Activated CD4-positive, alpha-beta T cell treated with anti-CD3 and anti-CD28 coated beads for 36 hours (primary cell): ENCODE measurements at regions of chr17 and their contacts with region 1.

Region 1: DNA sequence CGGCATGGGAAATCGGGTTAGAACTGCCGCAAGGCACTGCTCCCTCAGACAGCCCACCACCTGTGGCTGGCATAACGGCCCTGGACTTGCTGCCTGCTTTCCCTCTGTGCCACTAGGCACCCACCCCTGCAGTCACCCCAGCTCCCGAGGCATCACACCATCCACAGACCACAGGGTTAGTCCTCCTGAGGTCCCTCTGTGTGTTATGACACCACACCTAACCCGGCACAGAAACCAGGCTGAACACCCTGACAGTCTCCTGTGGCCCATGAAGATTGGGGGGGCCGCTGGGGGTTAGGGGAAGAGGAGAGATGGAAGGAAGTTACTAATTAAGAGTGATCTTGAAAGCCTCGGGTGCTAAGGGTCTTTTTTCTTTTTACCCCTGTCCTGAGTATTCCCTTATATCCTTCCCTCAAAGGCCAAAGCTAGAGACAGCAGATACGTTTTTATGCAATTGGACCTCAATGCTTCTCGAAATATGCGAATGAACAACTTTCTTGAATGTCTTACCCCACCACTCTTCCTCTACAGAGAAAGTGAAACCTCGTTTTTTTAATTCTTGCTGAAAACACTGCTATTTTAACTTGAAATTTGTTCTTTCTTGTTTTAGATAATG is 7.0 kb downstream of the CYTH1 start:
- DNase-seq: peak; percentile 86
- ATAC-seq: peak; percentile 67
- H3K4me3 Mint-ChIP-seq: peak overlapping the region; percentile 84
- H3K27ac Mint-ChIP-seq: peak overlapping the region; percentile 100
- H3K4me1 Mint-ChIP-seq: peaks cover 68% of the 10 kb centered on the region
- H3K27me3 Mint-ChIP-seq: no peaks in the 10 kb centered on the region

Region 2: GRCh38 chr17:78432226-78433012 is 342.6 kb before region 1 on chr17:
- CTCF ChIA-PET with region 1: no interaction called
- POLR2A ChIA-PET with region 1: no interaction called
- intact Hi-C with region 1: no loop called
- DNase-seq: no peak
- ATAC-seq: no peak
- H3K4me3 Mint-ChIP-seq: no peak overlapping the region
- H3K27ac Mint-ChIP-seq: no peak overlapping the region
- H3K4me1 Mint-ChIP-seq: peaks cover 5% of the 10 kb centered on the region
- H3K27me3 Mint-ChIP-seq: no peaks in the 10 kb centered on the region

Region 3: DNA sequence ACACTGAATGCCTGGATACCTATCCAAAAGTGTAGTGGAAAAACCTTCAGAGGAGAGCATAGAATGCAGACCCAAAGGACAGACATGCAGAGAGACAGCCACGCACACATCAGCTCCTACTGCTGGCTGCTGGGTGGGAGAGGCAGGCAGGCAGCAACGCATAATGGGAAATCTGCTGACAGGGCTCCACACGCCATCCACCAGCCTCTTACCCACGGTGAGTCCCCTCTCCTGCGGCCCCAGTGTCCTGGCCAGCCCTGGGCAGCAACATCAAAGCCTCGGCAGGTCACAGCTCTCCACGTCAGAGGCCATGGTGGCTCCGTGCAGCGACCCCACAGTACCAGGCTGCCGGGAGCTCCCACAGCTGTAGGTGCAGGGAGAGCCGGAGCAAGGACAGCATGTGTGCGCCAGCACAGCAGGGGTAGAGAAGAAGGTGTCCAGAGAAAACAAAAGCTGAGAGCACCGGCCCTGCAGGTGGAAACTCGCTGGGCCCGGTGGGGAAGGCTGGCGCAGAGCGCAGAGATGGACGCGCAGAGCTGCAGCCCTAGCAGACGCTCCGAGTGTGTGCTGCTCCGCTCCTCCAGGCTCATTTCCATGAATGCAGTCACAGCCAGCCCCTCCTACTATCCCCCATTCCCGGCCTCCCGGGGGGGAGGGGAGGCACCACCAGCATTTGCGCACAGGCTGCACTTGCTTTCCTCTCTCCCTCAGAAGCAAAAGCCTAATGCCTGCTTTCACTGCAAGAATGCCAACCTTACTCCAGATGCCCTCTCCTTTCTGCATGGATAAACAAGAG is 51.9 kb before region 1 on chr17:
- CTCF ChIA-PET with region 1: interaction called, 5 read pairs
- POLR2A ChIA-PET with region 1: interaction called, 3 read pairs
- intact Hi-C with region 1: loop called (anchors 2 kb)
- DNase-seq: no peak
- ATAC-seq: no peak
- H3K4me3 Mint-ChIP-seq: no peak overlapping the region
- H3K27ac Mint-ChIP-seq: peak overlapping the region; percentile 83
- H3K4me1 Mint-ChIP-seq: peaks cover 94% of the 10 kb centered on the region
- H3K27me3 Mint-ChIP-seq: no peaks in the 10 kb centered on the region

Region 4: DNA sequence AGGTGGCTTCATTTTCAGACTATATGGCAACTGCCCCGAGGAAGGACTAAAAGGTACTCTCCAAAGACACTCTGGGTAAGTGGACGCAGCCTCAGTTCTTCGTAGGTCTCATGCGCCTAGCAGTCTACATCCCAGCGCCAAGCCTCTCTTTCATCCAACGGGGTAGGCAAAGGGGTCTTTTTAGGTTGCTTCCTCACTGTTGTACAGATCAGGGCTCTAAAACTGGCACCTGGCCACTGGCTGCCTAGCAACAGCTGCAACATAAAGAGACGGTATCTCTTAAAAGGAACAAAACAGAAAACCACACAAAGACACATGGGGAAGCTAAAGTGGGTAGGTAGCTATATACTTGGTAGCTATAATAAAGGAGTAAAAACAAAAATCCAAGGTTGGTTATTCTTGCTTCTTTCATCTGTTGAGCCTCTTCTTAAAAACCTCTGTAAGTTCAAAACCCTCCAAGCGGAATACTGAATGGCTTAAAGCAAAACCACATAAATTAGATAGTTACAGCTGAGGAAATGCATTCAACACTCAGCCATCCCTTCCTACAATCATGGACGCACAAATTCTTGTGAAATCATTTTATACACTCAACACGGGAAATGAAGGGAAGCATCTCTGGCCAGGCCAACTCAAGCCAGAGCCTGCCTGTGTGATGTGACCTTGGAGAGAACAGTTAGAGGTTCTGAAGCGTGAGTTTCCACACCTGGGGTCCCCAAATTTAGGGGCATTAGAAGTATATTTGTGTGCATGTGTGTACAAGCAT is 15.7 kb before region 1 on chr17:
- CTCF ChIA-PET with region 1: interaction called, 8 read pairs
- POLR2A ChIA-PET with region 1: interaction called, 8 read pairs
- intact Hi-C with region 1: loop called (anchors 1 to 2 kb)
- DNase-seq: peak; percentile 86
- ATAC-seq: peak; percentile 65
- H3K4me3 Mint-ChIP-seq: peak overlapping the region; percentile 60
- H3K27ac Mint-ChIP-seq: peak overlapping the region; percentile 99
- H3K4me1 Mint-ChIP-seq: peaks cover 85% of the 10 kb centered on the region
- H3K27me3 Mint-ChIP-seq: no peaks in the 10 kb centered on the region